T-cell (primary cell): ENCODE measurements at regions of chr14 and their contacts with region 1.

Region 1: DNA sequence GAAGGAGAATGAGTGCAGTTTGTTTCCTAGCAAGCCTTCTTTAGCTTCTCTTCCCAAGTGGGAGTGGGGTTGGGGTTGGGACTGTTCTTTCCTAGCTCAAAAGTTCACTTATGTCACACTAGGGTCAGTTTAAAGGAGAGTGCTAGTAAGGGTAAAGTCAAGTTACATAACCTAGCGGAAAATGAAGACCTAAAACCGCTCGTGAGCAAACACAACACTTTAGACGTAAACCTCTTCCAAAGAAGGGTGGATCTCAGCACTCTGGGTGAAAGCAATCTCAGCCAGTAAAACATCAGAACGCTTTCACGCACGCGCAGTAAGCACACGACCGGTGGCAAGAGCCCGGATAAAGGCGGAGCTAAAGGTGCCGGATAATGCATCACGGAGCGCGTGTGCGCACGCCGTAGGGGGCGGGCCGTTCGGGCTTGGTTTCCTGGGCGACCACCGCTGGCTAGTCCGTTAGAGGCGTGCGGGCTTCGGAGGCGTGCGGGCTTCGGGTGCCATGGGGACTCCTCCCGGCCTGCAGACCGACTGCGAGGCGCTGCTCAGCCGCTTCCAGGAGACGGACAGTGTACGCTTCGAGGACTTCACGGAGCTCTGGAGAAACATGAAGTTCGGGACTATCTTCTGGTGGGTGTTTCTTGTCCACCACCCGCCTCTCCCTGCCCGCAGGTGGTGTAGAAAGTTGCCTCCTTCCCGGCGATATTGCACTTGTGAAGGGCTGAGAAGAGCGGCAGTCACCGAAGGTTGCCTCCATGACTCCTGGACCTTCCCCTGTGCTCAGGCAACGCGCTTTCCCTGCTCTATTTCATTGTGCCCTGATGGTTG is at the start of gene SNAPC1:
- DNase-seq: peak; percentile 92 to 100 (median 97)
- ATAC-seq: peak; percentile 95 to 99 (median 98)
- H3K4me3 ChIP-seq: peak within 1 kb of the TSS; percentile 90 to 98
- H3K4me3 Mint-ChIP-seq: peak within 1 kb of the TSS; percentile 93 to 99 (median 94)
- H3K27ac ChIP-seq: peak within 1 kb of the TSS; percentile 100
- H3K27ac Mint-ChIP-seq: peak within 1 kb of the TSS; percentile 100
- H3K4me1 ChIP-seq: peaks cover 3 to 25% of the 10 kb centered on the region in 2 experiments
- H3K4me1 Mint-ChIP-seq: peaks cover 48 to 57% (median 54%) of the 10 kb centered on the region in 3 donors
- H3K27me3 ChIP-seq: no peaks in the 10 kb centered on the region
- H3K27me3 Mint-ChIP-seq: no peaks in the 10 kb centered on the region
- total RNA-seq, gene SNAPC1: 2.8 to 6.4 (median 4.0) TPM

Region 2: GRCh38 chr14:61475316-61475715 is 286.9 kb before region 1 on chr14:
- CTCF ChIA-PET with region 1: no interaction called
- POLR2A ChIA-PET with region 1: interaction called, 4 to 17 read pairs
- DNase-seq: peak in 1 of 35 experiments; percentile 78
- ATAC-seq: no peak
- H3K4me3 ChIP-seq: no peak overlapping the region
- H3K4me3 Mint-ChIP-seq: peak overlapping the region in 1 of 3 donors; percentile 89
- H3K27ac ChIP-seq: peak overlapping the region; percentile 99
- H3K27ac Mint-ChIP-seq: peak overlapping the region; percentile 96
- H3K4me1 ChIP-seq: peaks cover 85 to 87% of the 10 kb centered on the region in 2 experiments
- H3K4me1 Mint-ChIP-seq: peaks cover 93 to 97% (median 95%) of the 10 kb centered on the region in 3 donors
- H3K27me3 ChIP-seq: no peaks in the 10 kb centered on the region
- H3K27me3 Mint-ChIP-seq: no peaks in the 10 kb centered on the region

Region 3: DNA sequence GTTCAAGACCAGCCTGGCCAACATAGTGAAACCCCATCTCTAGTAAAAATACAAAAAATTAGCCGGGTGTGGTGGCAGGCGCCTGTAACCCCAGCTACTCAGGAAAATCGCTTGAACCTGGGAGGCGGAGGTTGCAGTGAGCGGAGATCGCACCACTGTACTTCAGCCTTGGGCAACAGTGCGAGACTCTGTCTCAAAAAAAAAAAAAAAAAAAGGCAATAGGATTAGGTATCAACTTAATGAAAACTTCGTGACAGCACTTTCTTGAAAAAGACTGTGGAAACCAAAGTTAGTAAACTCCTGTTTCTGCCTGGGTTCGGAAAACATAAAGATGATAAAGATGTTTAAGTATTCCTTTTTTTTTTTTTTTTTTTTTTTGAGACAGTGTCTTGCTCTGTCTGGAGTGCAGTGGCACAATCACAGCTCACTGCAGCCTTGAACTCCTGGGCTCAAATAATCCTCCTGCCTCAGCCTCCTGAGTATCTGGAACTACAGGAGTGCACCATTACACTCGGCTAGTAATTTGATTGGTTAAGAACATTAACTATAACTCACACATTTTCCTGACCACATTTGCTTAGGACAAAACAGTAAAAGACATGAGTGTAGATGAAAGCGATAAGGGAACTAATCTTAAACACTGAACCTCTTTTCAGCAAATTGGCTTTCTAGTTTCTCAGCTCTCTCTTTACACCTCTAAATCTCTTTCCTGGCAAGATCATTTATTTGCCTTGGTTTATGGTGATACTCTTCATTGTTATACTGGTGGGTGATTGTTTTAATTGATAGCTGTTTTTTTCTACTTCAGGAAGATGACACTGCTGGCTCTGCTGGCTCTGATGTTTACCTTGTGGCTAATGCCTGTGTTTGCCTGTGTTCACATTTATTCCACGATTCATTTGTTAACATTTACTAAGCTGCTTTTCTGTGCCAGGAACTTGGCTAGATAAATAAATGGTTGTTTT is 51.0 kb before region 1 on chr14:
- CTCF ChIA-PET with region 1: no interaction called
- POLR2A ChIA-PET with region 1: interaction called in 1 of 2 experiments, 10 read pairs
- DNase-seq: no peak
- ATAC-seq: peak in 1 of 4 experiments; percentile 41
- H3K4me3 ChIP-seq: no peak overlapping the region
- H3K4me3 Mint-ChIP-seq: peak overlapping the region; percentile 4 to 60 (median 55)
- H3K27ac ChIP-seq: no peak overlapping the region
- H3K27ac Mint-ChIP-seq: peak overlapping the region; percentile 19 to 28
- H3K4me1 ChIP-seq: peaks cover 23 to 51% of the 10 kb centered on the region in 2 experiments
- H3K4me1 Mint-ChIP-seq: peaks cover 87 to 91% (median 90%) of the 10 kb centered on the region in 3 donors
- H3K27me3 ChIP-seq: no peaks in the 10 kb centered on the region
- H3K27me3 Mint-ChIP-seq: no peaks in the 10 kb centered on the region

Region 4: GRCh38 chr14:61750708-61751474 is 11.3 kb before region 1 on chr14:
- CTCF ChIA-PET with region 1: interaction called in 1 of 2 experiments, 9 read pairs
- POLR2A ChIA-PET with region 1: interaction called, 8 to 20 read pairs
- DNase-seq: peak; percentile 39 to 87 (median 65)
- ATAC-seq: peak; percentile 90 to 99 (median 98)
- H3K4me3 ChIP-seq: peak overlapping the region; percentile 40 to 49
- H3K4me3 Mint-ChIP-seq: peak overlapping the region; percentile 81 to 85 (median 84)
- H3K27ac ChIP-seq: no peak overlapping the region
- H3K27ac Mint-ChIP-seq: peak overlapping the region; percentile 76
- H3K4me1 ChIP-seq: peaks cover 0 to 3% of the 10 kb centered on the region in 2 experiments
- H3K4me1 Mint-ChIP-seq: peaks cover 8 to 20% (median 11%) of the 10 kb centered on the region in 3 donors
- H3K27me3 ChIP-seq: no peaks in the 10 kb centered on the region
- H3K27me3 Mint-ChIP-seq: no peaks in the 10 kb centered on the region

Region 5: DNA sequence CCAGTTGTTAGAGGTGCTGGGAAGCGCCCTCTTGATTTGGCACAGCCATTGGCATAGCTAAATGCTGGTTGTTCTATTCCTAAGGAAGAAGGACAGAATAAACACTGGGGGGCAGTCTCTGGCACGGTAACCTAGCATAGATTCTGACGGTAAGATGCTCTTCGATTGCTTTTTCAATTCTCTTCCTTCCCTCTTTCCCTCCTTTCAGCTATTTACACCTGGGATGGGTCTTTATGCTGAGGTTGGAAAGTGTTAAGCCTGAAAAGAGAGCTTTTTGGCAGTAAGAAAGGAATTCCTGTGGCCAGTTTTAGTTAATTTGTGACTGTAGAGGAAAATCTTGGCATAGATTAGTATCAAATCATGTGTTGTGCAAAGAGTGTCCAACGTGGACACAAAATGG is 162.9 kb after region 1 on chr14:
- CTCF ChIA-PET with region 1: no interaction called
- POLR2A ChIA-PET with region 1: no interaction called
- DNase-seq: peak in 9 of 35 experiments; percentile 0 to 41 (median 3)
- ATAC-seq: peak in 1 of 4 experiments; percentile 35
- H3K4me3 ChIP-seq: no peak overlapping the region
- H3K4me3 Mint-ChIP-seq: no peak overlapping the region
- H3K27ac ChIP-seq: no peak overlapping the region
- H3K27ac Mint-ChIP-seq: no peak overlapping the region
- H3K4me1 ChIP-seq: no peaks in the 10 kb centered on the region
- H3K4me1 Mint-ChIP-seq: no peaks in the 10 kb centered on the region
- H3K27me3 ChIP-seq: no peaks in the 10 kb centered on the region
- H3K27me3 Mint-ChIP-seq: peaks cover 15 to 40% of the 10 kb centered on the region in 2 donors